Right ventricle myocardium inferior (tissue), 1 donor: ENCODE measurements at regions of chr9 and their contacts with region 1.

Region 1: GRCh38 chr9:38088006-38088925 is 19.2 kb upstream of the SHB start:
- DNase-seq: peak; percentile 86
- ATAC-seq: peak; percentile 77

Region 2: DNA sequence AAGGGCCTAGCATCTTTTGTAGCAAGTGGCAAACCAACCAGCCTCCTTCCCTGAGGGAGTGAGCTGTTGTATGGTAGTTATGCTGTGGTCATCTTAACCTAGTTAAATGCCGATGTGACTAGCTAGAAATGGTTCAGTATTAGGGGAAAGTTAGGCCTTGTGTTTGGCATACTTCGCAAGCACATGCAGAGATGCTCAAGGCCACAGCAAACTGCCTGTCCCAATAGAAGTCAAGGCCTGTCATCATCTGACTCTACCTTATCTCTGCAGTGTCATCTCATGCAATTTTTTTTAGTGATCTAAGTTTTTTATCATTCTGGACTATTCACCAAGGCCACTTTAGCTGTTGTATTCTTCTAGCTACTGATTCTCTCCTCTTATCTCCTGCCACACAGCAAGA is 298.2 kb before region 1 on chr9:
- intact Hi-C with region 1: no loop called
- DNase-seq: no peak
- ATAC-seq: no peak

Region 3: DNA sequence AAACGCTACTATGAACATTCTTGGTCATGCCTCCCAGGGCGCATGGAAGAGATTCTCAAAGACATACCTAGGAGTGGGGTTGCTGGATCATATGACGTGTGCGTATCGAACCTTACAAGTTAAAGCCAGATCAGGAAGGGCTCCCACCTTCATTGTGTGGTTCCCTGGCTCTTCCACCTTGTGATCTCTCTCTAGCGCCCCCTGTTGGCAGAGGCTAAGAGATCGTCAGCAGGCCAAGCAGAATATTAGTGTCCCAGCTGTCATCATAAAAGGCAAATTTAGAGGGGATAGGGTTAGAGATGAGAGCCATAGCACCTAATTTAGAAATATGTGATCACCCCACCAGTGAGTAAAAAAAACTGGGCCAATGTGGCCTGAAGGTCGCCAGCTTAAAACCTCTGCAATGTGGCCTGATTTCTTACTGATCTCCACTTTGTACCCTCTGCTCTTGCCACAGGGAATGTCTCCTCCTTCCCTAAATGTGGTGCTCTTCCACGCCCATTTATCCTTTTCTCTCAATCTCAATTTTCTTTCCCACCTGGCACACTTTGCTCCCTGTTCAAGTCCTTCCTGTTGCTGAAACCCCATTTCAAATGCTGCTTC is 72.4 kb after region 1 on chr9:
- intact Hi-C with region 1: loop called (anchors 2 kb)
- DNase-seq: no peak
- ATAC-seq: peak; percentile 53

Region 4: GRCh38 chr9:38362852-38363593 is 274.8 kb after region 1 on chr9:
- intact Hi-C with region 1: loop called (anchors 5 kb)
- DNase-seq: no peak
- ATAC-seq: peak; percentile 78